ENCODE measurements at regions of chr16 and their contacts with region 1.

Region 1: DNA sequence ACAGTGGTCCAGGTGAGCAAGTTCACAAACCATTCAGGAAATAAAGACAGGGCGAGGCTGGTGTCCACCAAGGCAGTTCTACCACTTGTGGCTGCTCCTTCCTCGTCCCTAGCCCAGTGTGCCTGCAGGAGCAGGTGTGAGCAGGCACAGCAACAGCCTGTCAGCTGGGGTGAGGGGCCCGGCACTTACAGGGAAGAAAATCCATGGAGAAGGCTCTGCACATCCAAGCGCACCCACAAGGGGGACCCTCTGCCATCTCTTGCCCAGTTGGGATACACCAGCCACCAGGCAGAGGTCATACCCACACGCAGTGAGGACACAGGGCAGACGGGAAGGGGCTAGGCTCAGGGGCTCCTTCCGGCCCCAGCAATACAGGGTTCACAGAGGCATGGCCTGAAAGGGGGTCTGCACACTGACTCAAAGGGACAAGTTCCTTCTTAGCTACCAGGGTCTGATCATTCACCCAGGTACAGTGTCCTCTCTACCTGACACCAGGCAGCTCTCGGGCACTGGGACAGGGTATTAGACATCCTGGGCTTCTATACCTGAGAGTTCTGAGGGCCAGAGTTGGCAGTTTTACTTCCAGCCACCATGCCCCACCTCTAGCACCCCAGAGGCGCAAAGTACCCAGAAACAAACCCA is 27.0 kb downstream of the CDIP1 start:
- DNase-seq: peak; percentile 77
- H3K4me3 ChIP-seq: no peak overlapping the region
- H3K27ac ChIP-seq: no peak overlapping the region
- H3K4me1 ChIP-seq: no peaks in the 10 kb centered on the region; a peak in 1 of 4 replicates
- H3K27me3 ChIP-seq: no peaks in the 10 kb centered on the region
- CTCF ChIP-seq: peak; percentile 56
- EP300 ChIP-seq: no peak
- RAD21 ChIP-seq: peak; percentile 65

Region 2: GRCh38 chr16:4500272-4500671 is 11.3 kb before region 1 on chr16:
- CTCF ChIA-PET with region 1: interaction called, 37 read pairs
- POLR2A ChIA-PET with region 1: no interaction called
- DNase-seq: no peak
- H3K4me3 ChIP-seq: no peak overlapping the region
- H3K27ac ChIP-seq: peak overlapping the region; percentile 69 to 80; a peak in 3 of 4 replicates
- H3K4me1 ChIP-seq: peaks cover 7 to 33% of the 10 kb centered on the region in 2 experiments; a peak in 3 of 4 replicates
- H3K27me3 ChIP-seq: no peaks in the 10 kb centered on the region
- CTCF ChIP-seq: no peak
- EP300 ChIP-seq: peak in 1 of 2 experiments; percentile 90; a peak in 2 of 4 replicates
- RAD21 ChIP-seq: no peak

Region 3: GRCh38 chr16:4637501-4638166 is 126.1 kb after region 1 on chr16:
- CTCF ChIA-PET with region 1: no interaction called
- POLR2A ChIA-PET with region 1: no interaction called
- DNase-seq: no peak
- H3K4me3 ChIP-seq: no peak overlapping the region
- H3K27ac ChIP-seq: no peak overlapping the region
- H3K4me1 ChIP-seq: no peaks in the 10 kb centered on the region
- H3K27me3 ChIP-seq: no peaks in the 10 kb centered on the region
- CTCF ChIP-seq: no peak
- EP300 ChIP-seq: no peak
- RAD21 ChIP-seq: no peak